Heart left ventricle (tissue), 16 donors: ENCODE measurements at regions of chr2 and their contacts with region 1.

Region 1: GRCh38 chr2:119641562-119642258 is 37.3 kb upstream of the TMEM177 start:
- DNase-seq: peak; percentile 56 to 74 (median 66)
- ATAC-seq: peak; percentile 56 to 94 (median 88)
- H3K4me3 ChIP-seq: no peak overlapping the region
- H3K27ac ChIP-seq: no peak overlapping the region
- H3K4me1 ChIP-seq: peaks cover 0 to 14% (median 8%) of the 10 kb centered on the region in 12 donors
- H3K27me3 ChIP-seq: peaks cover 0 to 6% (median 0%) of the 10 kb centered on the region in 9 donors
- CTCF ChIP-seq: peak; percentile 86 to 95 (median 92)
- POLR2A ChIP-seq: no peak

Region 2: GRCh38 chr2:119523952-119524694 is 117.6 kb before region 1 on chr2 and contains the start of gene SCTR:
- intact Hi-C with region 1: loop called in 1 of 10 experiments (anchors 10 kb)
- DNase-seq: peak in 1 of 5 donors; percentile 24
- ATAC-seq: peak in 3 of 4 donors; percentile 32 to 59 (median 49)
- H3K4me3 ChIP-seq: peak within 1 kb of the TSS in 8 of 12 donors; percentile 7 to 39 (median 19)
- H3K27ac ChIP-seq: no peak within 1 kb of the TSS
- H3K4me1 ChIP-seq: peaks cover 0 to 16% (median 0%) of the 10 kb centered on the region in 12 donors
- H3K27me3 ChIP-seq: peaks cover 5 to 48% (median 19%) of the 10 kb centered on the region in 9 donors
- CTCF ChIP-seq: no peak
- POLR2A ChIP-seq: no peak
- total RNA-seq, gene SCTR: 0.28 to 2.2 (median 0.44) TPM in 8 of 9 donors, not detected in the other

Region 3: GRCh38 chr2:119659601-119660342 is 18.1 kb after region 1 on chr2:
- intact Hi-C with region 1: loop called in 5 of 10 experiments (anchors 1 to 2 kb)
- DNase-seq: peak in 2 of 5 donors; percentile 25 to 43
- ATAC-seq: peak in 2 of 4 donors; percentile 36 to 43
- H3K4me3 ChIP-seq: no peak overlapping the region
- H3K27ac ChIP-seq: no peak overlapping the region
- H3K4me1 ChIP-seq: peaks cover 0 to 7% (median 0%) of the 10 kb centered on the region in 12 donors
- H3K27me3 ChIP-seq: no peaks in the 10 kb centered on the region
- CTCF ChIP-seq: peak; percentile 76 to 89 (median 83)
- POLR2A ChIP-seq: no peak

Region 4: DNA sequence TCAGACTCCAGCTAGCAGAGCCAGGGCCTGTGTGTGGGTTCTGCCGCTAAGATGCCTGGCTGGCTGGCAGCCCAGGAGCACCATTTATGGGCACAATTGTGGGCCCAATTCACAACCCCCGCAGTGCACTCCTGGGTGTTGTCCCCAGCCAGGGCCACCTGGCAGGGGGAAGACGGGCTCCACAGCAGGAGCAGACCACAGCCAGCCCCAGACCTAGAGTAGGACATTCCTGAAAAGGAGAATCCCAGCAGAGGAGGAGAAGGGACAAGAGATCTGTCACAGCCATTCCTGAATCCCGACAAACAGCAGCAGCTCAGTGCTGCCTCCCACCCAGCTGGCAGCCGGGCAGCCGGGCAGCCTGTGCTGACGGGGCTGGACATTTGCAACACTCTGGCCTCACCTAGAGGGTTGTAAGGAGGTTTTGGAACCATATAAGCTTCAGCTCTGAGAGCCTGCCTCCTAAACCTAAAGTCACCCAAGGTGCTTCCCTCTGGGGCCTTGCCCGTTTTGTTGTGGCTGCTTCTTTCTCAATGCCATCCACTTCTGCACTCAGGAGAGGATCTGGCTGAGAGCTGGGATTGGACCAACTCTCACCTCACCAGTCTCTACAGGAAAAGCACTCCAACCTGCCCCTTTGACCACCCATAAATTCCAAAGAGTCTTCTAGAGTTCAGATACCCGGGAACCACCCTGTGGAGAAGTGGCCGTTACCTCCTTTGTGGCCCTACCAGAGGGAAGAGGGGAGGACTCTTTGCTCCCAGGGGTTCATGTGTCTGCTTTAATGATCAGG is 33.2 kb after region 1 on chr2:
- intact Hi-C with region 1: loop called in 1 of 10 experiments (anchors 5 kb)
- DNase-seq: no peak
- ATAC-seq: no peak
- H3K4me3 ChIP-seq: no peak overlapping the region
- H3K27ac ChIP-seq: peak overlapping the region in 1 of 12 donors; percentile 67
- H3K4me1 ChIP-seq: peaks cover 0 to 8% (median 5%) of the 10 kb centered on the region in 12 donors
- H3K27me3 ChIP-seq: no peaks in the 10 kb centered on the region
- CTCF ChIP-seq: peak in 1 of 12 donors; percentile 6
- POLR2A ChIP-seq: no peak